ENCODE measurements at regions of chr21 and their contacts with region 1.

Region 1: GRCh38 chr21:39527664-39528381 is 76.1 kb downstream of the SH3BGR start:
- DNase-seq: no peak
- H3K4me3 ChIP-seq: no peak overlapping the region
- H3K27ac ChIP-seq: no peak overlapping the region
- H3K4me1 ChIP-seq: no peaks in the 10 kb centered on the region
- H3K27me3 ChIP-seq: no peaks in the 10 kb centered on the region
- CTCF ChIP-seq: no peak

Region 2: GRCh38 chr21:39467746-39468145 is 60.1 kb before region 1 on chr21:
- CTCF ChIA-PET with region 1: no interaction called
- dilution Hi-C with region 1: no loop called
- in situ Hi-C with region 1: no loop called
- intact Hi-C with region 1: no loop called
- DNase-seq: no peak
- H3K4me3 ChIP-seq: no peak overlapping the region
- H3K27ac ChIP-seq: no peak overlapping the region
- H3K4me1 ChIP-seq: no peaks in the 10 kb centered on the region
- H3K27me3 ChIP-seq: peaks cover 2% of the 10 kb centered on the region
- CTCF ChIP-seq: no peak

Region 3: GRCh38 chr21:39715804-39716397 is 188.1 kb after region 1 on chr21:
- CTCF ChIA-PET with region 1: no interaction called
- dilution Hi-C with region 1: no loop called
- in situ Hi-C with region 1: loop called (anchors 10 to 25 kb)
- intact Hi-C with region 1: no loop called
- DNase-seq: peak; percentile 16
- H3K4me3 ChIP-seq: no peak overlapping the region
- H3K27ac ChIP-seq: no peak overlapping the region
- H3K4me1 ChIP-seq: no peaks in the 10 kb centered on the region
- H3K27me3 ChIP-seq: no peaks in the 10 kb centered on the region
- CTCF ChIP-seq: peak; percentile 30 to 62